Caco-2 (cell line): ENCODE measurements at regions of chr1 and their contacts with region 1.

Region 1: DNA sequence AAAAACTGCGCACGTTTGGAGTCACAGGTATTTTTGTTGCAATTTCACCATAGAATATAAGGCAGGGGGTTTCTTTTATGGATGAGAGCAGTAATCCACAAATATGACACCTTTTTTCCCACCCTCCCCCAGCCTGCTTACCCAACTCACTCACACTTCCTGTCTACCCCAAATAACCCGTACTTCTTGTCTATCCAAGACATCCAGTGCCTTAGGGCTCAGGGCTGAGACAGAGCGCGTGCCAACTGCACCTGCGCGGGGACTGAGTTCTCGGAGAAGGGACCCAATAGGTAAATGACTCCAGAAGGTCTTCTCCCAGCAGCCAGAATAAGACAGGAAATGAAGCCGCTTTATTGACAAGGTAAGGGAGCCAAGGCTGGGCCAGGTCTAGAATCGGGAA is 369.1 kb downstream of the SIPA1L2 start:
- DNase-seq: peak; percentile 58 to 59
- H3K4me3 ChIP-seq: no peak overlapping the region
- H3K4me3 Mint-ChIP-seq: peak overlapping the region; percentile 70
- H3K27ac Mint-ChIP-seq: peak overlapping the region; percentile 76
- H3K4me1 ChIP-seq: peaks cover 32% of the 10 kb centered on the region
- H3K4me1 Mint-ChIP-seq: peaks cover 39% of the 10 kb centered on the region
- H3K27me3 ChIP-seq: no peaks in the 10 kb centered on the region
- H3K27me3 Mint-ChIP-seq: no peaks in the 10 kb centered on the region
- CTCF ChIP-seq: no peak

Region 2: GRCh38 chr1:232186931-232187330 is 73.9 kb before region 1 on chr1:
- CTCF ChIA-PET with region 1: no interaction called
- POLR2A ChIA-PET with region 1: no interaction called
- intact Hi-C with region 1: loop called (anchors 10 kb)
- DNase-seq: no peak
- H3K4me3 ChIP-seq: no peak overlapping the region
- H3K4me3 Mint-ChIP-seq: no peak overlapping the region
- H3K27ac Mint-ChIP-seq: no peak overlapping the region
- H3K4me1 ChIP-seq: peaks cover 13% of the 10 kb centered on the region
- H3K4me1 Mint-ChIP-seq: peaks cover 12% of the 10 kb centered on the region
- H3K27me3 ChIP-seq: no peaks in the 10 kb centered on the region
- H3K27me3 Mint-ChIP-seq: no peaks in the 10 kb centered on the region
- CTCF ChIP-seq: no peak

Region 3: DNA sequence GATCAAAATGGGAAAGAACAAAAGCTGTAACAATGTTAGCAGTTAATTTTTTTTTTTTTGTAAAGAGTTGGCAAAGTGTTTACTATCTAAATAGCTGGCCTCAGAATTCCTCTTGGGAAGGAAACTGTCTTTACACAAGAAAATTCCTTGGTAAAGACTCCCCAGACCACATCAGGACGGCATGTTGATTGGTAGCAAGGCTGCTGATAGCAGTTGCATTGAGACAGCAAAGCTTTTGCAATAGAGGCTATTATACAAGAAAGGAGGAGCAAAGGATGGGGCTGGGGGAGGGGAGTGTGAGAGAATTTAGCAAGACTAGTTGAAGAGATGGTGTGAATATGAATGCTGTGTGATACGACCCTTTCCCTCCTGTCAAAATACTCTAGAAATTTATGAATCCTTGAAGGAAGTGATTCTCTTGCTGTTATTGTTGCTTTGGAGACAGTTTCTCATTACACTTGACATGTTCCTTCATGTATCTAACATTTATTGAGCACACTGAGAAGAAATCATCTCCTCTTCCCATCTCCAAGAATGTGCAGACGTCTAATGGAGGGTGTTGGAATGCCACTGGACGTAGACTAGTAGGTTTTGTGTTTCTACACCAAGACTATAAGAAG is 13.5 kb after region 1 on chr1:
- CTCF ChIA-PET with region 1: no interaction called
- POLR2A ChIA-PET with region 1: no interaction called
- intact Hi-C with region 1: loop called (anchors 2 kb)
- DNase-seq: peak in 1 of 2 experiments; percentile 50
- H3K4me3 ChIP-seq: no peak overlapping the region
- H3K4me3 Mint-ChIP-seq: no peak overlapping the region
- H3K27ac Mint-ChIP-seq: no peak overlapping the region
- H3K4me1 ChIP-seq: peaks cover 10% of the 10 kb centered on the region; the same call in 1 of the 2 replicates
- H3K4me1 Mint-ChIP-seq: peaks cover 14% of the 10 kb centered on the region
- H3K27me3 ChIP-seq: no peaks in the 10 kb centered on the region
- H3K27me3 Mint-ChIP-seq: no peaks in the 10 kb centered on the region
- CTCF ChIP-seq: no peak

Region 4: DNA sequence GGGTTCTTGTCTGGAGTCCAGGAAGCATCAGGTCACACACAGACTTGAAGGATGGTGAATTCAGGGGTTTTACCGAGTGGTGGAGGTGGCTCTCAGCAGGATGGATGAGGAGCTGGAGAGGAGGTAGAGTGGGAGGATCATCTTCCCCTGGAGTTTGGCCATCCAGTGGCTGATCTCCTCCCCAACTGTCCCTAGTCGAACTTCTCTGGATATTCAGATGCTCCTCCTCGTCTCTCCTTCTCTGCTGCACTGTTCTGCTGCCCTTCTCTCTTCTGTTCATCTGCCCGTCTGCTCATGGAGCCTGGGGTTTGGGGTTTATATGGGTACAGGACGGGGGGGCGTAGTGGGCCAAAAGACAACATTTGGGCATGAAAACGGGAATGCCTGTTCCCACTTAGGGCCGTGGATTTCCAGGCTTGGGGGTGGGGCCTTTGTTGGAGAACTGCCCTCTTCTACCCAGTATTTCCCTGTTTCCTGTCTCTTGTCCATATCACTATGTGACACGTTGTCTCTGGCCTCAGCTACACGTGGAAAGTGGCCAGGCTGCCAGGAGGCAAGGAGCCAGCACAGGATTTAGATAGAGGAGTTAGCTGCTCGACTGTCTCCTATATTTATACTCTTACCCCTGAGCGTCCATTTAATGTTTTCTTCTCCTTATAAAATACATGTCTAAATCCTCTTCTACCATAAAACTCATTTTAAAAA is 292.4 kb after region 1 on chr1:
- CTCF ChIA-PET with region 1: no interaction called
- POLR2A ChIA-PET with region 1: interaction called, 4 read pairs
- intact Hi-C with region 1: loop called (anchors 1 kb)
- DNase-seq: no peak
- H3K4me3 ChIP-seq: no peak overlapping the region
- H3K4me3 Mint-ChIP-seq: no peak overlapping the region
- H3K27ac Mint-ChIP-seq: peak overlapping the region; percentile 76
- H3K4me1 ChIP-seq: peaks cover 55% of the 10 kb centered on the region
- H3K4me1 Mint-ChIP-seq: peaks cover 63% of the 10 kb centered on the region
- H3K27me3 ChIP-seq: no peaks in the 10 kb centered on the region
- H3K27me3 Mint-ChIP-seq: no peaks in the 10 kb centered on the region
- CTCF ChIP-seq: no peak

Region 5: GRCh38 chr1:232622997-232623380 is 362.1 kb after region 1 on chr1:
- CTCF ChIA-PET with region 1: interaction called, 4 read pairs
- POLR2A ChIA-PET with region 1: no interaction called
- intact Hi-C with region 1: loop called (anchors 2 kb)
- DNase-seq: no peak
- H3K4me3 ChIP-seq: no peak overlapping the region
- H3K4me3 Mint-ChIP-seq: no peak overlapping the region
- H3K27ac Mint-ChIP-seq: no peak overlapping the region
- H3K4me1 ChIP-seq: peaks cover 22% of the 10 kb centered on the region
- H3K4me1 Mint-ChIP-seq: peaks cover 27% of the 10 kb centered on the region
- H3K27me3 ChIP-seq: no peaks in the 10 kb centered on the region
- H3K27me3 Mint-ChIP-seq: no peaks in the 10 kb centered on the region
- CTCF ChIP-seq: no peak